ENCODE measurements at regions of chr11 and their contacts with region 1.

Region 1: GRCh38 chr11:32176223-32176934 is 85.5 kb downstream of the RCN1 start:
- DNase-seq: peak; percentile 70 to 73
- H3K4me3 ChIP-seq: no peak overlapping the region
- H3K27ac ChIP-seq: no peak overlapping the region
- H3K4me1 ChIP-seq: no peaks in the 10 kb centered on the region
- H3K27me3 ChIP-seq: no peaks in the 10 kb centered on the region
- CTCF ChIP-seq: peak; percentile 79 to 83 (median 82)
- POLR2A ChIP-seq: no peak

Region 2: GRCh38 chr11:32052218-32052617 is 124.2 kb before region 1 on chr11:
- intact Hi-C with region 1: loop called (anchors 5 kb)
- DNase-seq: peak; percentile 45 to 47
- H3K4me3 ChIP-seq: no peak overlapping the region
- H3K27ac ChIP-seq: no peak overlapping the region
- H3K4me1 ChIP-seq: no peaks in the 10 kb centered on the region
- H3K27me3 ChIP-seq: no peaks in the 10 kb centered on the region
- CTCF ChIP-seq: peak; percentile 63 to 83 (median 68)
- POLR2A ChIP-seq: no peak

Region 3: DNA sequence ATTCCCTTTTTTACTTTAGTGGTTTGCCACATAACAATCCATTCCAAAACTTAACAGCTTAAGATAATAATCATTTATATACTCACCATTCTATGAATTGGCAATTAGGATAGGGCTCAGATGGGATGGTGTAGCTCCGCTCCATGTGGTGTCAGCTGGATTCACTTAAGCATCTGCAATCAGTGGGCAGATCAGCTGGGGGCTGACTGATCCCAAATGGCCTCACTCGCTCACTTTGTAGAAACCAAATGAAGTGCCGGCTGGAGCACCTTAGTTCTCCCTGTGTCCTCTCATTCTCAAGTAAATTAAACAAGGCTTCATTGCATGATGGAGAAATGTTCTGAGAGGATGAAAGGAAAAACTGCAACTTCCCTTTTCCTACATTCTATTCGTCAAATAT is 97.6 kb after region 1 on chr11:
- intact Hi-C with region 1: no loop called
- DNase-seq: no peak
- H3K4me3 ChIP-seq: no peak overlapping the region
- H3K27ac ChIP-seq: no peak overlapping the region
- H3K4me1 ChIP-seq: no peaks in the 10 kb centered on the region
- H3K27me3 ChIP-seq: no peaks in the 10 kb centered on the region
- CTCF ChIP-seq: no peak
- POLR2A ChIP-seq: no peak

Measured in uterus (tissue), 4 donors.